Right ventricle myocardium inferior (tissue), 1 donor: ENCODE measurements at regions of chr18 and their contacts with region 1.

Region 1: GRCh38 chr18:32018331-32019250 is at the start of gene RNF125:
- DNase-seq: peak; percentile 94
- ATAC-seq: peak; percentile 94
- total RNA-seq, gene RNF125: 5.6 TPM

Region 2: GRCh38 chr18:31990823-31991222 is 27.8 kb before region 1 on chr18:
- intact Hi-C with region 1: loop called (anchors 2 kb)
- DNase-seq: no peak
- ATAC-seq: no peak

Region 3: GRCh38 chr18:32072321-32072720 is 53.7 kb after region 1 on chr18:
- intact Hi-C with region 1: no loop called
- DNase-seq: no peak
- ATAC-seq: no peak

Region 4: GRCh38 chr18:32092422-32093101 is 74.0 kb after region 1 on chr18:
- intact Hi-C with region 1: loop called (anchors 2 kb)
- DNase-seq: peak; percentile 99
- ATAC-seq: peak; percentile 99